Mucosa of descending colon (tissue), 3 donors: ENCODE measurements at regions of chr15 and their contacts with region 1.

Region 1: GRCh38 chr15:77821188-77821958 is 188.7 kb upstream of the LINGO1 start:
- DNase-seq: peak in 2 of 3 donors; percentile 74 to 77
- ATAC-seq: peak; percentile 65
- H3K4me3 ChIP-seq: no peak overlapping the region
- H3K4me1 ChIP-seq: peaks cover 11% of the 10 kb centered on the region
- CTCF ChIP-seq: peak; percentile 30

Region 2: GRCh38 chr15:77589839-77590238 is 231.5 kb before region 1 on chr15:
- intact Hi-C with region 1: no loop called
- DNase-seq: no peak
- ATAC-seq: no peak
- H3K4me3 ChIP-seq: no peak overlapping the region
- H3K4me1 ChIP-seq: no peaks in the 10 kb centered on the region
- CTCF ChIP-seq: no peak

Region 3: GRCh38 chr15:77633134-77633912 is 188.1 kb before region 1 on chr15:
- intact Hi-C with region 1: loop called in 1 of 2 experiments (anchors 10 kb)
- DNase-seq: peak; percentile 83 to 94 (median 92)
- ATAC-seq: peak; percentile 98
- H3K4me3 ChIP-seq: no peak overlapping the region
- H3K4me1 ChIP-seq: peaks cover 16% of the 10 kb centered on the region
- CTCF ChIP-seq: peak; percentile 99

Region 4: DNA sequence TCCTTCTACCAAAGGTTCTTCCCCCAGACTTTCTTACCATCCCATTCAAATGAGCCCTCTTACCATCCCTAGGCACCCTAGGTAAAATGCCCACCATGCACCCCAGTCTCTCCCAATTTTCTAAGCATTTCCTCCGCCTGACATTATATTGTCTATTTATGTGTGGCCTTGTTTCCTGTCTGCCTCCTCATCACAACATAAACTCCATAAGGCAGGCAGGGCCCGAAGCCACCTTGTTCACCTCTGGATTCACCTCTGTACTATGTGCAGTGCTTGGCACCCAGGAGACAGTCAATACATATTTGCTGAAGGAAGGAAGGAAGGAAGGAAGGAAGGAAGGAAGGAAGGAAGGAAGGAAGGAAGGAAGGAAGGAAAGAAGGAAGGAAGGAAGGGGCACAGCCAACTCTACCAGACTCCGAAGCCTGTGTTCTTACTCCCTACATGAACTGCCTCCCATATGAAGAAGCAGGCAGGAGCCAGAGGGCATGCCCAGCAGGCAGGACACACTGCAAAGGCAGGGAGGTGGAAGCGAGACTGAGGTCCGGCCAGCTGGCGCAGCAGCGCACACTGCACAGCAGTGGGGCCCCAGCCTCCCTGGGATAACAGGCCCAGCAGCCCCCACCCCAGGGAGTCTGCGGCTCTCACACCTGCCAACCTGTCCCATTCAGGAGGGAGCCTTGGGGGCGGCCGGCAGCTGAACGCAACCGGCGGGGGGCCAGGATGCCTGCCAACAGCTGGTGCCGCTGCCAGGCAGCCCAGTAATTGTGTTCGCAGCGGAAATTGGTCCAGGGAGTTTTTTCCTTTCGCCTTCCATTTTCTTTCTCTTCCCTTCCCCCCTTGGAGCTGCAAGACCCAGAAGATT is 82.7 kb before region 1 on chr15:
- intact Hi-C with region 1: no loop called
- DNase-seq: no peak
- ATAC-seq: no peak
- H3K4me3 ChIP-seq: no peak overlapping the region
- H3K4me1 ChIP-seq: no peaks in the 10 kb centered on the region
- CTCF ChIP-seq: no peak

Region 5: DNA sequence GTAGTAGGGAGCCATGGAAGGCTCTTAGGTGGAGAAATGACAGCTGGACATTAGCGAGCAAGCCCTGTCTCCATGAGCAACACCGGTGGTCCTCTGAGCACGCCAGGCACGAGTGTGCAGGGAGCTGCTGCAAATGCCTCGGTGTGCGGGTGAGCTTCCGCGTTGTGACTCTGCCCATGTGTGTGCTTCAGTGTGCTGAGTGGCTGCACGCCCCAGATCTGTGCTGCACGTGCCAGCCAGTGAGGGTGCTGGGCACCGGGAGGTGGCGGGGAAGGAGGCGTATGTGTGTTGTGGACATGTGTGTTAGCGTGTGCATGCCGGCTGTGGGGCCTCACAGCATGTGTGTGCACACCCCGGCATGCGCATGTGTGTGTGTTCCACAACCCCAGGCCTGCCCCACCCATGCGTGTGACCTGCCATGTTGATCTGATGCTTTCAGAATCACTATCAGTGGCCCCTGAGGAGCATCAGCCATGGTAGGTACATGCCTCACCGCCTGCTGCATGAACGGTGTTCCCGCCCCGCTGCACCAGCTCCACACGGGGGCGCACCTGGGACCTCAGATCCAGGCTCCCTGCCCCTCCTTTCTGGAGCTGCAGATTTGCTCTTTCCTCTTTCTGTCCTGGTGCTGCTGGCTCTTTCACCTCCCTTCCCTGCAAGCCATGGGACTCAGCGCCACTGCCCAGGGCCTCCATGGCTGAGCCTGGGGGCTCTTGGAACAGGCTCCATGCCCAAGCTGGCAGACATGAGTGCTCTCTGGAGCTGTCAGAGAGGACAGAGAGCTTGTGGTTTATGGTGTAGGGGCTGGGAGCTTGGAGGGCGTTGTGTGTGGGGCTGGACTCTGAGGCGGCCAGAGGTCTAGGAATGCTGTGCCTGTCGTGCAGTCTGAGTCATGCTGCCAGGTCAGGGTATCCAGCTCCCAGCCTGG is 86.7 kb after region 1 on chr15:
- intact Hi-C with region 1: no loop called
- DNase-seq: peak; percentile 78 to 82 (median 79)
- ATAC-seq: peak; percentile 91
- H3K4me3 ChIP-seq: no peak overlapping the region
- H3K4me1 ChIP-seq: peaks cover 4% of the 10 kb centered on the region
- CTCF ChIP-seq: peak; percentile 46